AG04449 (cell line): ENCODE measurements at regions of chr4 and their contacts with region 1.

Region 1: DNA sequence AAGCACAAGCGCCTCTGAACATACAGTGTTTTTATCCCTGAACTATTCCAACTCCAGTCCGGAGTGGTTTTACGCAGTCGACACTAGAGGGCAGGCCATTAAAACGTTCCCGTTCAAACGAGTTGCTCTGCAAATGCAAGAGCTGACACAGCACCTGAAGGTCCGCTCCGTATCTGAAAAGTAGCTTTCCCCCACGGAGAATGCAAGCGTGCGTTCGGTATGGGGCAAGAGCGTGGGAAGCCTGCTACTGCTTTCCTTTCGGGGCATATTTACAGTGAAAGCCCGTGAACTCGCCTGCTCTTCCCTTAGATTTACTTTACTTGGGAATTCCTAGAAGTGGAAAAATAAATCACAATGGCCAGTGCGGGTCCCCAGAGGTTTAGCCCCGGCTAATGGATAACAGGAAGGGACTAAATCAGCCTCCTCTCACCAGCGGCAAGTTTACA is 190.8 kb downstream of the TSPAN5 start:
- DNase-seq: peak; percentile 67
- H3K4me3 ChIP-seq: peak overlapping the region; percentile 55
- CTCF ChIP-seq: peak; percentile 78

Region 2: GRCh38 chr4:98411731-98412130 is 55.9 kb before region 1 on chr4:
- CTCF ChIA-PET with region 1: no interaction called
- POLR2A ChIA-PET with region 1: no interaction called
- DNase-seq: no peak
- H3K4me3 ChIP-seq: no peak overlapping the region
- CTCF ChIP-seq: no peak

Region 3: DNA sequence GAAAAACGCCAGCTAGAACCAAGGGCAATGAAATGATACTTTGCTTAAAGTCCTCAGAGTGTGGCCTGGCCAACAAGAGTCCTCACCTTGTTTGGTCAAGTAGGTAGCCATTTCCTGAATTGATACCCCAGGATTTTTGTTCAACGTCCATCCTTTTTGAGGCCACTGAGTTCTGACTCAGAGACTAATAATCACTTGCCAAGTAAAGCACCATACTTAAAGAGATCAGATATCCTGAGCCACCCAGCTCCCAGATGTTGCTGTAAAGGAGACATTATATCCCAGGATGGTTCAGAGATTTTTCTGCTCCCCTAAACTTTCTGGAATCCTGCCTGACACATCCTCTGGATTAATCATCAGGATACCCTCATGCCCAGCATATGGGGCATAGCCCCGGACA is 15.6 kb before region 1 on chr4:
- CTCF ChIA-PET with region 1: interaction called, 20 read pairs
- POLR2A ChIA-PET with region 1: no interaction called
- DNase-seq: no peak
- H3K4me3 ChIP-seq: no peak overlapping the region
- CTCF ChIP-seq: no peak

Region 4: GRCh38 chr4:98482847-98483806 is 15.5 kb after region 1 on chr4:
- CTCF ChIA-PET with region 1: interaction called, 33 read pairs
- POLR2A ChIA-PET with region 1: no interaction called
- DNase-seq: no peak
- H3K4me3 ChIP-seq: no peak overlapping the region
- CTCF ChIP-seq: no peak

Region 5: DNA sequence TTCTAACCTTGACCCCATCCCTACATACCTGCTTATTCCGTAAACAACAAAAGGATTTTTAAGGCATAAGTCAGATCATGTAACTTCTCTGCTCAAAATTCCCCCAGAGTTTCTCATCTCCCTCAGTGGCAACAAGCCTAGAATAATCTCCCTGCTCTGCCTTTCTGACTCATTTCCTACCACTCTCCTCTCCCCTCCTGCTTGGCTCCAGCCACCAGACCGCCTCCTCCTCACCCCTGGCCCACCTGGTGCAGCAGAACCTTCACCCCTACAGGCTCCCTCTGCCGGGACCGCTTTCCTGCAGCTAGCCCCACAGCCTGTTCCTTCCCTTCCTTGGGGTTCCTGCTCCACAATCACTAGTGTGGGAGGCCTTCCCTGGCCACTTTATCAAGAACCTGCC is 158.7 kb after region 1 on chr4:
- CTCF ChIA-PET with region 1: interaction called, 15 read pairs
- POLR2A ChIA-PET with region 1: no interaction called
- DNase-seq: peak; percentile 51
- H3K4me3 ChIP-seq: no peak overlapping the region
- CTCF ChIP-seq: no peak

Region 6: GRCh38 chr4:98658287-98659105 is 190.8 kb after region 1 on chr4 and contains the start of gene TSPAN5:
- CTCF ChIA-PET with region 1: interaction called, 18 read pairs
- POLR2A ChIA-PET with region 1: interaction called, 4 read pairs
- DNase-seq: no peak
- H3K4me3 ChIP-seq: peak within 1 kb of the TSS; percentile 92
- CTCF ChIP-seq: no peak

Region 7: GRCh38 chr4:98733601-98734000 is 266.0 kb after region 1 on chr4:
- CTCF ChIA-PET with region 1: interaction called, 10 read pairs
- POLR2A ChIA-PET with region 1: no interaction called
- DNase-seq: no peak
- H3K4me3 ChIP-seq: no peak overlapping the region
- CTCF ChIP-seq: no peak

Region 8: DNA sequence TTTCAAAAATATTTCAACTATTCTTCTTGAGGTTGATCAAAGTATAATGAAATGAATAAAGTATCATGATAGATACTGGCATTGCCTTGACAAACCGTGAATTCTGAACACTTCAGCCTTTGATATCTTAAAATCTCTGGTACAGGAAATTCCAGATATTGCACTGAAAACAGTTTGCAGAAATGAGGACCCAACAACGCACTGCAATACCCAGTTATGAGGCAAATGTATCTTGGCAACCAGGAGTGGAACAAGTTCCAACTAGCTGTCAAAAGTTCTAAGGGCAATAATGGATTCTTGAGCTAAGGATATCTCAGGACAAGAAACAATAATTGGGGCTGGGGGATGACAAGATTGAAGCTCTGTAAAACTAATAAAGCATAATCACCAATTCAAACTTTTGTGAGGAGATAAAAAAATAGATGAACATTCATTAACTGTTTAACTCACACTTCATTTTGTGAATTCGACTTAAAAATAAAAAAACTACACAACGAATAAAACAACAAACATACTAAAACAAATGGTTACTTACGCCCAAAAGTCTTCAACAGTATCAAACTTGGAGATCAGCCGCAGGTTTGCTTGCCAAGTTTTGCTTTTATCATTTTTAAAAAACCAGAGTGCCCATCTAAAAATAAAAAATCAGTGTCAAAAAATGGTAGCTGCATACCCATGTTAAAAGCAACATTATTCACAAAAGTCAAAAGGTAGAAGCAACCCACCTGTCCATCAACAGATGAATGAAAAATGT is 423.2 kb after region 1 on chr4:
- CTCF ChIA-PET with region 1: no interaction called
- POLR2A ChIA-PET with region 1: no interaction called
- DNase-seq: no peak
- H3K4me3 ChIP-seq: no peak overlapping the region
- CTCF ChIP-seq: no peak

Region 9: GRCh38 chr4:99028187-99028586 is 560.5 kb after region 1 on chr4:
- CTCF ChIA-PET with region 1: no interaction called
- POLR2A ChIA-PET with region 1: no interaction called
- DNase-seq: no peak
- H3K4me3 ChIP-seq: no peak overlapping the region
- CTCF ChIP-seq: no peak